Left lung (tissue), 14 donors: ENCODE measurements at regions of chr2 and their contacts with region 1.

Region 1: DNA sequence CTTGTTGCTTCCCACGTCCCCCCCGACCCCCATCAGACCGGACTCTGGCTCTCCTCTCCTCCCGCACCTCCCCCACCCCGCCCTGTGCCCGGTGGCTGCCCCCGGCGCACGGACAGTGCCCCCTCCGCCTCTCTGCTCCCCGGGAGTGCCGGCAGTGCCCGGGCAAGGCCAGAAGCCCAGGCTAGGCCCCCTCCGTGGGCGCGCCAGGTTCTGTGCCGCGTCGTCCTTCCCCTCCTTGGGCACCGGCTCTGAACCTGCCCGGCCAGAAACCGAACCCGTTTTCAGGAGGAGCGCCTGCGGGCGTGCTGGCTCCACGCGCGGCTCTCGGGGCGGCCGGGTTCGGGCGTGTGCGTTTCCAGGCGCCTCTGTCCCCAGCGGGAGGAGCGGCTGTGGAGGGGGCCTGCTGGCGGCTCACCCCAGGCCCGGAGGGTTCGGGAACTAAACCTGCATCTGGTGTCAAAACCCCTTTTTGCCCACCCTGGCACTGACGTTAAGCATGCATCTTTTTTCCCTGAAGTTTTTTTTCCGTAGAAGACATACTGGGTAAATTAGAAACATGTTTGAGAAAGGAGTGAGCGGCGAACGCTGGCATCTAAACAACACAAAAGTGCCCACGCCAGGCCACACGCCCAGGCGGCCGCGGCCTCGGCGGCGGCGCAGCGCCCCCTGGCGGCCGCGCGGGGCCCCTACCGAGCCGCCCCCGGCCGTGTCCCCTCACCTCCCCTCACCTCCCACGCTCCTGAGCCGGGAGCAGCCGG is 123.9 kb upstream of the SLC1A4 start:
- DNase-seq: peak; percentile 70 to 94 (median 74)
- ATAC-seq: peak; percentile 90
- H3K4me3 ChIP-seq: peak overlapping the region; percentile 62 to 69
- H3K27ac ChIP-seq: peak overlapping the region; percentile 92 to 97
- H3K4me1 ChIP-seq: peaks cover 7 to 52% of the 10 kb centered on the region in 2 donors
- H3K27me3 ChIP-seq: no peaks in the 10 kb centered on the region
- CTCF ChIP-seq: peak; percentile 74 to 78

Region 2: GRCh38 chr2:64330281-64331113 is 534.8 kb before region 1 on chr2:
- intact Hi-C with region 1: loop called in 1 of 2 experiments (anchors 10 kb)
- DNase-seq: peak; percentile 78 to 93 (median 87)
- ATAC-seq: peak; percentile 82
- H3K4me3 ChIP-seq: no peak overlapping the region
- H3K27ac ChIP-seq: peak overlapping the region; percentile 21 to 79
- H3K4me1 ChIP-seq: peaks cover 10 to 46% of the 10 kb centered on the region in 2 donors
- H3K27me3 ChIP-seq: no peaks in the 10 kb centered on the region
- CTCF ChIP-seq: peak; percentile 87 to 90

Region 3: DNA sequence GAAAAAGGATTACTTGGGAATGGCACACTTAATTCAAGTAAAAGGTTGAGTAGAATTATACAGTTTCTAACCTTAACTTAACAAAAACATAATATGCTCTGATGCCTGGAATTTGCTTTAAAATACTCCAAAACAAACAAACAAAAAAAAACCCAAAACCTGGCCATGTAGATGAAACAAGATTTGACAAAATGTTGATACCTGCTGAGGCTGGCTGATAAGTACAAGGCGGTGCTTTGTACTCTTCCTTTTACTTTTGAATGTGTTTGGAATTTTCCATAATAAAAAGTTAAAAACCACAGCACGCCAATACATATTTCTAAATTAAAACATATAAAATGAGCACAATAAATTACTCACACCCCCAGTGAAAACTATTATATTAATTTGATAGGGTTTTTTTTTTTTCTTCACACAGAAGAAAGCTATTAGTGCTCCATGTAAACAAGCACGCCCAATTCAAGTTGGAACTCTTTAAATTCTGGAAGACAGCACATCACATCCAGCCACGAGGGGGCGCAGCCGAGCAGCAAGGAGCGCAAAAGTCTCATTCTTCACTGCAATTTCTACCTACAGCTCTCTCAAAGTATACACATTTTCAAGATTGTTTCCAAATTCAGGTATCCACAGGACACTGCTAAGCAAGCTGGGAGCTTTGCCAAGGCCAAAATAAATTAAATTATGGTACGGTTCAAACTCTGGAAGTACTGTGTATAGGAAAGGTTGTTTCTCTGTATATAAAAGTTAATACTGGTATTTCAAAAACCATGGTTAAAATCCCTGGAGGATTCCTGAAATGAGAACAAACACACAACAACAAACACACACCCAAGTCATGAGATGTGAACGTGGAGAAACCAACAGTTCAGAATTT is 219.0 kb before region 1 on chr2:
- intact Hi-C with region 1: loop called in 1 of 2 experiments (anchors 2 kb)
- DNase-seq: peak; percentile 65 to 95 (median 82)
- ATAC-seq: peak; percentile 52
- H3K4me3 ChIP-seq: no peak overlapping the region
- H3K27ac ChIP-seq: peak overlapping the region in 1 of 2 donors; percentile 94
- H3K4me1 ChIP-seq: peaks cover 17 to 81% of the 10 kb centered on the region in 2 donors
- H3K27me3 ChIP-seq: no peaks in the 10 kb centered on the region
- CTCF ChIP-seq: peak; percentile 84 to 97

Region 4: DNA sequence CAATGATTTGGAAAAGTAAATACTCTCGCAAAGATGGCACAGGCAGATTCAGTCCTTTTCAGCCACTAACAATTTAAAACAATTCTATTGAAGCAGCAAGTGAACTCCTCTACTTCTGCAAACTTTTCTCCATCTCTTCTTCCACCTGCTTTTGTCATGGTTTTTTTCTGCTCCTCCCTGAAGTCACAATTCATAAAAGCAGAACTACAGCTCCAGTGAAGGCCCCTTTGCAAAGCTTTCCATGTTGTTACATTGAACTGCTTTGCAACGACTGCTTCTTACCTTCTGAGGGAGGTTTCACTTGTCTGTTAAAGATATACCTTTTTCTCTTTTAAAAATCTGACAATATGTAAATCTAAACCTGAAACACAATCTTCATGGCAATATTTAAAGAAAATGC is 207.8 kb before region 1 on chr2:
- intact Hi-C with region 1: no loop called
- DNase-seq: no peak
- ATAC-seq: no peak
- H3K4me3 ChIP-seq: no peak overlapping the region
- H3K27ac ChIP-seq: no peak overlapping the region
- H3K4me1 ChIP-seq: peaks cover 4 to 37% of the 10 kb centered on the region in 2 donors
- H3K27me3 ChIP-seq: no peaks in the 10 kb centered on the region
- CTCF ChIP-seq: no peak

Region 5: DNA sequence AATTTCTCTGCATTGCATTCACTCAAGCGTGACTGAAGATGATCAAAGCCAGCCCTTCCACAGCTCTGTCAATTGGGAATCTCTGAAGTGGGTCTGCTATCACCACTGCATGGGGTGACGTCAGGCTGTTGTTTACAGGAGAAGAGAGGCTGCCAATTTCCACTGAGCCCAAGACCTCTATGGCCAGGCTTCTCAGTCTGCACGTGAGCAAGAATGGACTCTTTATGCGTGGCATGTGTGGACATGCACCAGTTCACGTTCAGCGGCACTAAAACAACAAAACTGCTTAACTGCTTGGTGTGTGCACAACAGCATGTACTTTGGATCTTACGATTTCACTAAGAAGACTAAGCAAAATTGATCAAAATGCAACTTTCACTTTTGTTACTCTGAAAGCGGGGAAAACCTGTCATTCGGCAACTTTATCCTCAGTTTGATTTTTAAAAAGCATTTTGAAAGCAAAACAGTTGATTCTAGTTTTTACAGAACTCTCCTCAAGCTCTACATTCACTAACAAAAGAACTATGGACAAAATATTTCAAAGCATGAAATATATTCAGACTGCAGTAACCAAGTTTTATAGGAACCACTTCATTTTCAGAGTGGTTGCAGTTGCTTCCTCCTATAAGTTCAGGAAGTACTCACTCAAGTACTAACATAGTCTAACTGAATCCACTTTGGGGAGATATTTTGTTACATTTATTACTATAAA is 134.5 kb before region 1 on chr2:
- intact Hi-C with region 1: no loop called
- DNase-seq: peak in 3 of 4 donors; percentile 63 to 87 (median 80)
- ATAC-seq: peak; percentile 92
- H3K4me3 ChIP-seq: peak overlapping the region; percentile 17 to 37
- H3K27ac ChIP-seq: peak overlapping the region; percentile 87 to 89
- H3K4me1 ChIP-seq: peaks cover 16 to 48% of the 10 kb centered on the region in 2 donors
- H3K27me3 ChIP-seq: no peaks in the 10 kb centered on the region
- CTCF ChIP-seq: no peak

Region 6: DNA sequence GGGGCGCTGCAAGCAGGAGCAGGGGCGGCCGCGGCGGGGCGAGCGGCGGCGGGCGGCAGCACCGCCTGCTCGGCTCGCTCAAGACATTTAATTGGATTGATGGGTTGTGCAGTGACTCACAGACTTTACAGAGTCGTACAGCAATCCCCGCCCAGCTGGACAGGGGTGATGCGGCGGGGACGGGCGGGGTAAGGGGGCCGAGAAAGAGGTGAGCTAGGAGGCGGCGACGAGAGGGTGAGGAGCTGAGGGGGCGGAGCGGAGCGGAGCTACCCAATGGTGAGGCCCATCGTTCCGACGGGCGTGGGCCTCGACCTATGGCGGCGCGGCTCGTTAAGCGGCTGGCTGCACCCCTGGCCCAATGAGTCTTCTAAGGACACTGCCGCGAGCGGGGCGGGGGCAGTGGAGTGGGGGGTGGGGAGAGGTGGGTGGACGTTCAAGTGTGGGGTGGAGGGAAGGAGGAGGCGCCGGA is 114.4 kb before region 1 on chr2:
- intact Hi-C with region 1: loop called in 1 of 2 experiments (anchors 10 kb)
- DNase-seq: peak; percentile 98 to 100 (median 100)
- ATAC-seq: peak; percentile 88
- H3K4me3 ChIP-seq: peak overlapping the region; percentile 69
- H3K27ac ChIP-seq: peak overlapping the region; percentile 98
- H3K4me1 ChIP-seq: peaks cover 8 to 30% of the 10 kb centered on the region in 2 donors
- H3K27me3 ChIP-seq: no peaks in the 10 kb centered on the region
- CTCF ChIP-seq: no peak